AG04449 (cell line): ENCODE measurements at regions of chr2 and their contacts with region 1.

Region 1: DNA sequence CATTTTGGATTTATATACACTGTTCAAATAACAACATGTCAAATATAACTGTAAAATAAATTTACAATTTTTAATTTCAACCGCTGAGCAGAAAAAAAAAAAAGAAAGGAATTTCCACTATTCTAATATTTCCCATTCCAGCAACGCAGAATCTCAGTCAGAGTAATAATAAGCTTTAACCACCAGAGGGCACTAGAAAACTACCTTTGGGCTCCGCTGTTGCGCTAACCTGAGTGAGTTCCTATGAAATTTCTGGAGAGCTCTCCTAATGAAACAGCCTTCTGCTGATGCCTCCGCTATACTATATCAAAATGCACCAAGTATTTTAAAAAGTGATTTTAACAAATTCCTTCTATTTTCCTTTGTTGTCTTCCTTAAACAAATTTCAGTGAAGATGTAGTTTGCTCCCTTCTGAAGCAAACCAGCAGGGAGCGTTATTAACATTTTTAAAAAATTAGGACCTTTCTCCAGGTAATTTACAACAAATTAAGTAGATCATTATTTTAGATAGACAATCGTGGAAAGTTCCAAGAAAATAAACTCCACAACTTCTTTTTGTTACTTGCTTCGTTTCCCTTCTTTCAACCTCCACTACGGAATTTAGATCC is 23.0 kb downstream of the ERMN start:
- DNase-seq: no peak
- H3K4me3 ChIP-seq: no peak overlapping the region
- CTCF ChIP-seq: peak; percentile 60

Region 2: DNA sequence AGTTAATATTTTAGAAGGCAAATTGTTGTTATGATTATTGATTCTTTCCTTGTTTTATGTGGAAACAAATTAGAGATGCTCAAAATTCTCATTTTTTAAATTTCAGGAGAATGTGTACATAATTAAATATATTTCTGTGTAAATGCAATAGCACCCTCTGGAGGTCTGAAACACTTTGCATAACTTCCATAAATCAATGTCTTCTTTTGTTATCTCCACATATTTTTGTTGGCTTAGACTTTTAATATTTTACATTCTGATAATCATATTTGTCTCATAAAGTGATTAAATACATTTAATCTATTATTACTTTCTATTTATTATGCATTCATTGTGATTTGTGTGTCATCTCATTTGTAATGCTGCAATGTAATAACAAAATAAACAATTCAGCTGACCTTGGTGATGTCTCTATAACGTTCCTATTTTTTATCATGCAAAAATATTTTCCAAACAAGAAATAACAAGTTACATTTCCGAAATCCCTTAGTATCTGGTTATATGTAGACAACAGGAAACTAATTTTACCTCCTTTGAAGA is 246.9 kb before region 1 on chr2:
- CTCF ChIA-PET with region 1: no interaction called
- POLR2A ChIA-PET with region 1: no interaction called
- DNase-seq: no peak
- H3K4me3 ChIP-seq: no peak overlapping the region
- CTCF ChIP-seq: peak; percentile 34

Region 3: GRCh38 chr2:157264099-157264498 is 38.5 kb before region 1 on chr2:
- CTCF ChIA-PET with region 1: interaction called, 12 read pairs
- POLR2A ChIA-PET with region 1: no interaction called
- DNase-seq: no peak
- H3K4me3 ChIP-seq: peak overlapping the region; percentile 31; the same call in 1 of the 2 replicates
- CTCF ChIP-seq: no peak

Region 4: DNA sequence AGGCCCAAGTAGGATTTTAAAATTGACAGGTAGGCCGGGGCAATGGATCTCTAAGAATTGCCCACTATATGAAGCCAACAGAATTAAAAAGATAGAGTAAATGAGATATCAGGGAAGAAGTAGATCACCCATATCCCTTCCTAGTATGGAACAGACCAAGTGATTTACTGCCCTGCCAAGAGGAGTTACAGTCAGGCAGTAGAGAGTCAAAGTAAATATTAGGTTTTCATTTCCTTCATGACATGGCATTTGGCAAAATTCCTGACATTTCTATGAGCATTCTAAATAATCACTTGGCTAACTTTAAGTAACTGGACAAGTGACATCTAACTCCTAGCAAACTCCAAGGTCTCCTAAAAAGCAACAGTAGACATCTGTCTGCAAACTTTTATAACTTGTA is 11.6 kb before region 1 on chr2:
- CTCF ChIA-PET with region 1: interaction called, 70 read pairs
- POLR2A ChIA-PET with region 1: interaction called, 3 read pairs
- DNase-seq: no peak
- H3K4me3 ChIP-seq: no peak overlapping the region
- CTCF ChIP-seq: no peak

Region 5: GRCh38 chr2:157492189-157492773 is 189.7 kb after region 1 on chr2:
- CTCF ChIA-PET with region 1: interaction called, 19 read pairs
- POLR2A ChIA-PET with region 1: no interaction called
- DNase-seq: no peak
- H3K4me3 ChIP-seq: no peak overlapping the region
- CTCF ChIP-seq: peak; percentile 73

Region 6: DNA sequence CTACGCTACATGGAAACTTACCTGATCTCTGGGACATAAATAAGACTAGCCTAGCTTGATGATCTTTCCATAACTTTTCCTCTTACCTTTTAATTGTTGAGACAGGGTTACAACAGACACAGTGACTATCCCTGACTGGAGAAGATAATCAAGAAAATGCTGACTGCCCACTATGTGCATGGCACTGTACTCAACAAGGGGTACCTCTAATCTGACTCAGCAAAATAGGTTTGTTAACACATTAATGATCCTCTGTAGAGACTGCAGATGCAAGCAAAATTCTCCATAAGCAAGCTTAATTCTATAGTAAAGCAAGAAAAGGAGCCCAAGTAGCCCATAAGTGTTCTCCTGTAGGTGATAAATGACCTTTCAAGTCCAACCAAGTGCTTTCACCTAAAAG is 300.6 kb after region 1 on chr2:
- CTCF ChIA-PET with region 1: interaction called, 104 read pairs
- POLR2A ChIA-PET with region 1: no interaction called
- DNase-seq: no peak
- H3K4me3 ChIP-seq: no peak overlapping the region
- CTCF ChIP-seq: no peak